Posterior vena cava (tissue), 2 donors: ENCODE measurements at regions of chr5 and their contacts with region 1.

Region 1: DNA sequence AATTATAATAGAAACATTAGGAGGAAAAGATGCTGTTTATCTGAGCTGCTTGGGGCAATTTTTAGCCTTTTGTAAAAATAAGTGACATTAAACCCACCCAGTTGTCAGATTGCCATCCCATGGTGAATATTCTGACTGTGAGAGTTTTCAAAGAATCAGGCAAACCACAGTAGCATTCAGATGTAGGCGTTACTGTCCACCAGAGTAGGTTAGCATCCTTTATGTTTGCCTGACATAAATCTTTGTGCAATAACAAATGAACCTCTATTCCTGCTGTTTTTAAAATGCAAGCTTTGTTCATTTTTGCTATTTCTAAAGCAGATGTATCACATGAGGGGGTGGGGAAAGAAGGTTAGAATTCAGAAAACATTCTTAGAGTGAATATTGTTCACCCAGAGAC is 427.8 kb downstream of the CDH9 start:
- DNase-seq: no peak

Region 2: DNA sequence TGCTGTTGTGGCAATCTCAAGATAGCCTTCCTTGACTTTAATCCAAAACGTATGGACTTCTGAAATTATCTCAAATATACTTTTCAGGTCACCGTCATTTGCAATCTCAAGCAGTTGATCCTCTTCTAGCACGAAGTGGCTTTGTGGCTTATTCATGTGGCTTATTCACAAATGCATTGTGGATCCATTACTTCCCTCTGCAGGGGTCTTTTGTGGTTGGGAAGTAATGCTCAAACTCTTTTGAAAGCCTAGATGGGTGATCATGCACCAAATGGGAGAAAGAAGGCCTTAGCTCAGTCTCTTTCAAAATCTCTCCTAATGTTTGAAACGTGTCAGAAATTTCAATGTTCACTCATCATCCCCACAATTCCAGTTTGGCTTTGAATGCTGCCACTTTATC is 1368.6 kb before region 1 on chr5:
- intact Hi-C with region 1: loop called in 1 of 2 experiments (anchors 5 kb)
- DNase-seq: no peak

Region 3: GRCh38 chr5:26740182-26740581 is 129.6 kb after region 1 on chr5:
- intact Hi-C with region 1: no loop called
- DNase-seq: no peak